Psoas muscle (tissue), 8 donors: ENCODE measurements at regions of chr20 and their contacts with region 1.

Region 1: DNA sequence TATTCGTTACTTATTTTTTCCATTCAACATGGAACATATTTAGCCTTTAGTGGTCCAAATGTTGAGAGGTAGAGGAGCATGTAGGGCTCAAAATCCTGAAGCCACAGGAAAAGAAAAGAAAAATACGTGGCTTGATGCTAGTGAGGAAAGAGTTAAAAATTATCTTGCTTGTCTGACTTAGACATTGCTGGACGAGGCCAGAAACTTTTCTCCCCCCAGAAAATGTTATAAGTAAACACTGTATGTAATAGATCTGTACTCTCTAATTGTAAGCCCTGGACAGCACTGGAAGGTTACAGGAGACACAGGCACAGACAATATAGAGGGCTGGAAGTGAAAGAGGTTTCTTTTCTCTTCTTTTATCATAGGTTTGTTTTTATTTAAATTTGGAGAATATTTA is 165.6 kb downstream of the ZFP64 start:
- DNase-seq: no peak
- ATAC-seq: no peak
- H3K4me3 ChIP-seq: no peak overlapping the region
- H3K27ac ChIP-seq: no peak overlapping the region
- H3K4me1 ChIP-seq: no peaks in the 10 kb centered on the region
- H3K27me3 ChIP-seq: no peaks in the 10 kb centered on the region
- CTCF ChIP-seq: no peak

Region 2: DNA sequence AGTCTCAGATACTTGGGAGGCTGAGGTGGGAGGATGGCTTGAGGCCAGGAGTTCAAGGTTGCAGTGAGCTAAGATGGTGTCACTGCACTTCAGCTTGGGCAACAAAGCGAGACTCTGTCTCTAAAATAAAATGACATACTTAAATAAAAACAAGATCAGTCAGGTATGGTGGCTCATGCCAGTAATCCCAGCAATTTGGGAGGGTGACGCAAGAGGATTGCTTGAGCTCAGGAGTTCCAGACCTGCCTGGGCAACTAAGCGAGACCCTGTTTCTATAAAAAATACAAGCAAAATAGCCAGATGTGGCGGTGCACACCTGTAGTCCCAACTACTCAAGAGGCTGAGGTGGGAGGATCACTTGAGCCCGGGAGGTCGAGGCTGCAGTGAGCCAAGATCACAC is 16.0 kb after region 1 on chr20:
- intact Hi-C with region 1: no loop called
- DNase-seq: no peak
- ATAC-seq: no peak
- H3K4me3 ChIP-seq: no peak overlapping the region
- H3K27ac ChIP-seq: no peak overlapping the region
- H3K4me1 ChIP-seq: no peaks in the 10 kb centered on the region
- H3K27me3 ChIP-seq: no peaks in the 10 kb centered on the region
- CTCF ChIP-seq: no peak

Region 3: GRCh38 chr20:52056203-52057062 is 30.5 kb after region 1 on chr20:
- intact Hi-C with region 1: loop called in 1 of 2 experiments (anchors 1 kb)
- DNase-seq: no peak
- ATAC-seq: no peak
- H3K4me3 ChIP-seq: no peak overlapping the region
- H3K27ac ChIP-seq: no peak overlapping the region
- H3K4me1 ChIP-seq: no peaks in the 10 kb centered on the region
- H3K27me3 ChIP-seq: no peaks in the 10 kb centered on the region
- CTCF ChIP-seq: no peak

Region 4: DNA sequence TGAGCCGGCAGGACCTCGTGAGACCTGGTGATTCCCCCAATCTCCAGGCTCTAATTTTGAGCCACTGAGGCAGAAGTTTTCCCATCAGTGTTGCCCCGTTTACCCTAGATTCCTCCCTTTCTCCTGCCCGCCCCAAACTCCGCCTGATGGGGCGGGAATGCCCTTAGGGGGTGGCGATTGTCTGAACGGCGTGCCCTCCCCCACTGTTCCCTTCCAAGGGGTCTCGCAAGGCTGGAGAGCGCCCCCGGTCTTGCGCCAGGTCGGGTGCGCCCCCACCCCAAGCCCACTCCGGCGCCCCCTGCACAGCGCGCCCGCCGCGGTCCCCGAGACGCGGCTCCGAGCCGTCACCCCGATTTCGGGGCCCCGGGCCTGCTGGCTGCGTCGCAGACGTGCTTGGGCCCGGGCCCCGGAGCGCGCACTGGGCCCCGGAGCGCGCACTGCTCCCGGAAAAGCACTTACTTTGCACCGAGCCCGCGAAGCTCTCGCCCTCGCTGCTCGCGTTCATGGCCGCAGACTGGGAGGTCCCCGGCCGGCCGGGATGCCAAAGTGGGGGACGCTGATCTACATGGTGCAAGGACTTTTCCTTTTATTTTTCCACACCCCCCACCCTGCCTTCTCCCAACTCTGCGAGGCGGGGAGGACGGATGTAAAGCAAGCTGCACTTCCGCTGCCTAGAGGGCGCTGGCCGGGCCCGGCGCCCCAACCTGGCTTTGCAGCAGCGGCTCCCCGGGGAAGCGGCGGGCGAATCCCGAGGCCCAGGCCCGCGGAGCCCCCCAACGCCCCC is 165.4 kb after region 1 on chr20 and contains the start of gene ZFP64:
- intact Hi-C with region 1: no loop called
- DNase-seq: peak; percentile 71 to 77
- ATAC-seq: peak; percentile 83 to 95 (median 94)
- H3K4me3 ChIP-seq: peak within 1 kb of the TSS; percentile 97
- H3K27ac ChIP-seq: peak within 1 kb of the TSS; percentile 75
- H3K4me1 ChIP-seq: peaks cover 6% of the 10 kb centered on the region
- H3K27me3 ChIP-seq: no peaks in the 10 kb centered on the region
- CTCF ChIP-seq: peak; percentile 41
- total RNA-seq, gene ZFP64: 3.1 to 6.5 (median 4.0) TPM